ENCODE measurements at regions of chr4 and their contacts with region 1.

Region 1: GRCh38 chr4:76266627-76267026 is 15.1 kb downstream of the FAM47E start:
- DNase-seq: no peak
- H3K4me3 Mint-ChIP-seq: no peak overlapping the region
- H3K27ac Mint-ChIP-seq: no peak overlapping the region
- H3K4me1 Mint-ChIP-seq: no peaks in the 10 kb centered on the region
- H3K27me3 Mint-ChIP-seq: no peaks in the 10 kb centered on the region
- CTCF ChIP-seq: no peak

Region 2: GRCh38 chr4:76120199-76120598 is 146.4 kb before region 1 on chr4:
- CTCF ChIA-PET with region 1: interaction called, 12 read pairs
- intact Hi-C with region 1: no loop called
- DNase-seq: no peak
- H3K4me3 Mint-ChIP-seq: no peak overlapping the region
- H3K27ac Mint-ChIP-seq: no peak overlapping the region
- H3K4me1 Mint-ChIP-seq: no peaks in the 10 kb centered on the region
- H3K27me3 Mint-ChIP-seq: no peaks in the 10 kb centered on the region
- CTCF ChIP-seq: no peak

Measured in Calu3 (cell line).